Dorsolateral prefrontal cortex (tissue), 120 donors: ENCODE measurements at regions of chr17 and their contacts with region 1.

Region 1: GRCh38 chr17:18225121-18225566 is 291 bp upstream of the LLGL1 start:
- DNase-seq: peak; percentile 92 to 98 (median 96)
- H3K4me3 ChIP-seq: peak overlapping the region in 58 of 59 donors; percentile 38 to 86 (median 56)
- H3K27ac ChIP-seq: peak overlapping the region in 40 of 59 donors; percentile 13 to 82 (median 56)
- H3K27me3 ChIP-seq: no peaks in the 10 kb centered on the region
- CTCF ChIP-seq: peak in 10 of 56 donors; percentile 8 to 29 (median 18)

Region 2: GRCh38 chr17:18260332-18261144 is 35.4 kb after region 1 on chr17 and contains the start of gene MIEF2:
- intact Hi-C with region 1: loop called in 1 of 2 experiments (anchors 5 kb)
- DNase-seq: peak; percentile 91 to 98 (median 97)
- H3K4me3 ChIP-seq: peak within 1 kb of the TSS; percentile 70 to 99 (median 94)
- H3K27ac ChIP-seq: peak within 1 kb of the TSS in 57 of 59 donors; percentile 52 to 96 (median 84)
- H3K27me3 ChIP-seq: no peaks in the 10 kb centered on the region
- CTCF ChIP-seq: peak in 14 of 56 donors; percentile 5 to 43 (median 22)
- total RNA-seq, gene MIEF2: 12.6 to 31.3 (median 19.8) TPM

Region 3: GRCh38 chr17:18314731-18315561 is 89.8 kb after region 1 on chr17 and contains the starts of genes SMCR8 and TOP3A:
- intact Hi-C with region 1: loop called (anchors 2 kb)
- DNase-seq: peak; percentile 94 to 98 (median 97)
- H3K4me3 ChIP-seq: peak within 1 kb of the TSS; percentile 59 to 100 (median 94)
- H3K27ac ChIP-seq: peak within 1 kb of the TSS; percentile 27 to 98 (median 91)
- H3K27me3 ChIP-seq: no peaks in the 10 kb centered on the region
- CTCF ChIP-seq: peak in 35 of 56 donors; percentile 3 to 59 (median 26)
- total RNA-seq, gene SMCR8: 13.6 to 22.3 (median 18.4) TPM
- total RNA-seq, gene TOP3A: 30.1 to 65.0 (median 46.2) TPM